ENCODE measurements at regions of chr1 and their contacts with region 1.

Region 1: GRCh38 chr1:225881969-225882693 is at the start of gene TMEM63A:
- DNase-seq: peak; percentile 91
- ATAC-seq: peak; percentile 78
- H3K4me3 Mint-ChIP-seq: peak within 1 kb of the TSS; percentile 87
- H3K27ac Mint-ChIP-seq: peak within 1 kb of the TSS; percentile 90
- H3K4me1 Mint-ChIP-seq: peaks cover 40% of the 10 kb centered on the region
- H3K27me3 Mint-ChIP-seq: peaks cover 7% of the 10 kb centered on the region
- total RNA-seq, gene TMEM63A: 196 to 198 TPM

Region 2: DNA sequence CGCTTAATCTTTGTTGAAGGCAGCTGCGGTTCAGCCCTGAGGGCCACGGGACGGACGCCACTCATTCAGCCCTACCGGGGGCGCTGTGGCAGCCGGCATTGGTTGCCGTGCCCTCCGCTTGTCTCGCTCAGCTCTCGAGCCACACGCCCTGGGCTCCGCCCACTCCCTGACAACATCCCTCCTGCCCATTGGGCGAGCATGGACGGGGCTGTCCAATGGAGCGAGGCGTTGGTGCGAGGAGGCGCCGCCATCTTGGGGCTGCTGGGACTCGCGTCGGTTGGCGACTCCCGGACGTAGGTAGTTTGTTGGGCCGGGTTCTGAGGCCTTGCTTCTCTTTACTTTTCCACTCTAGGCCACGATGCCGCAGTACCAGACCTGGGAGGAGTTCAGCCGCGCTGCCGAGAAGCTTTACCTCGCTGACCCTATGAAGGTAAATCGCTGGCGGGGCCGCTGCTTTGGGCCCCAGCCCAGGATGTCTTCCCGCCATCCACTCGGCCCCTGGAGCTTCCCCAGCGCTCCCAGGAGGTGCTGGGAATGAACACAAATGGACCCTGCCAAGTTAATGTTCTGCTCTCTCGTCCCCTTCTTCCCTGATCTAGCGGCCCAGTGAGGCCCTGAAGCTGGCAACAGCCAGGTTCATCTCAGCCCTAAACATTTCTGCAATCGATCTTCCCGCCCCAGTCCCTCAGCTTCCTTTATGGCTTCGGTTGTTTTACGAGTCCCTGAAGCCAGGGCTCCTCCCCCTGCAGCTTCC is 104.4 kb before region 1 on chr1 and contains the start of gene SRP9:
- POLR2A ChIA-PET with region 1: interaction called, 63 read pairs
- DNase-seq: peak; percentile 98
- ATAC-seq: peak; percentile 97
- H3K4me3 Mint-ChIP-seq: no peak within 1 kb of the TSS
- H3K27ac Mint-ChIP-seq: no peak within 1 kb of the TSS
- H3K4me1 Mint-ChIP-seq: peaks cover 20% of the 10 kb centered on the region
- H3K27me3 Mint-ChIP-seq: no peaks in the 10 kb centered on the region
- total RNA-seq, gene SRP9: 209 to 226 TPM

Region 3: DNA sequence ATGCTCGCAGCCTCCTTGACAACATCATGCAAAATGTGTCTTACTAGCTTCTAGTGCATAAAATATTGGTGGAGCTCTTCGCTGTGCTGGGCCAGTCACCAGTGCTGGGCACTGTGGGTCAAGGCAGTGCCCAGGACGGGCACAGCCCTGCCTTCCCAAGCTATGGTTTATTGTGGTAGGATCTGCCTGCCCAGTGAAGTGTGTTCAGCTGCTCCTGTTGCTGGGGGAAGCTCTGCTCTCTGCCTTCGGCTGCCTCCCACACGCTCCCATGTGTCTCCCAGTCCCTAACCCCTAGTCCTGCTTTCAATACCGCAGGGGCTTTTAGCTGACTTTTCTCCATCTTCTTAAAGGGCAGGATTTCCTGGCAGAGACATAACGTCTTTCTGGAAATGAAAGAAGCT is 56.5 kb before region 1 on chr1:
- POLR2A ChIA-PET with region 1: no interaction called
- DNase-seq: no peak
- ATAC-seq: no peak
- H3K4me3 Mint-ChIP-seq: no peak overlapping the region
- H3K27ac Mint-ChIP-seq: no peak overlapping the region
- H3K4me1 Mint-ChIP-seq: no peaks in the 10 kb centered on the region
- H3K27me3 Mint-ChIP-seq: no peaks in the 10 kb centered on the region

Region 4: GRCh38 chr1:225866061-225866837 is 15.9 kb before region 1 on chr1:
- POLR2A ChIA-PET with region 1: interaction called, 26 read pairs
- DNase-seq: peak; percentile 50
- ATAC-seq: peak; percentile 93
- H3K4me3 Mint-ChIP-seq: peak overlapping the region; percentile 57
- H3K27ac Mint-ChIP-seq: peak overlapping the region; percentile 79
- H3K4me1 Mint-ChIP-seq: peaks cover 34% of the 10 kb centered on the region
- H3K27me3 Mint-ChIP-seq: no peaks in the 10 kb centered on the region

Region 5: DNA sequence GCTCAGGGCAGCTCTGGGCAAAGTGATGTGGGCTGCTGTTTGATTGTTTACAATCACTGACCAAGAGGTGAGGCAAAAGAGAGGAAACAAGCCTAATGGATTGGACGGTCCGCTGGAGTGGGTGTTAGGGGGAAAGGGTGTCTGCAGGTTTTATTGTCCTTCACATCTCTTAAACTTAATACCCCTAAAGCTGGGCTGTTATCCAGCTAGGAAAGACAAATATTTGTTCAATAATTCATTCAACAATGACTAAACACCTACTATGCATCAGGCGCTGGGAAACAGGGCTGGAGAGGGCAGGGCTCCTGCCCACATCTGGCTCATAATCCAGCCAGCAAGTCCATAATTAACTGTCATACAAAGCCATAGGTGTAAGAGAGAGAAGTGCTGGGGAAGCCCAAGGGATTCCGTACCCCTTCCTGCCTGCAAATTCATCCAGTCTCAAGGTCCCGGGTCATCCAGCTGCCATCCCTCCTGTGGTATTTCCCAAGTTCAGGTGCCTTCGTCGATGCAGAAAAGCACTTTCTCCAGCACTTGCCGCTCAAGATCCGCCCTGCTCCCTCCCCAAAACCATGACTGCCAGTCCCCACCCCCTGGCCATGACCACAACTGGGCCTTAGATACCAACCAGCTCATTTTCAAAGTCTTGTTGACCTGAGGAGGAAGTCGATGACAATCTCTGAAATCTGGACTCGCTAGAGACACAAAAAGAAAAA is 10.6 kb before region 1 on chr1:
- POLR2A ChIA-PET with region 1: interaction called, 26 read pairs
- DNase-seq: no peak
- ATAC-seq: no peak
- H3K4me3 Mint-ChIP-seq: no peak overlapping the region
- H3K27ac Mint-ChIP-seq: peak overlapping the region; percentile 40
- H3K4me1 Mint-ChIP-seq: peaks cover 45% of the 10 kb centered on the region
- H3K27me3 Mint-ChIP-seq: no peaks in the 10 kb centered on the region

Region 6: DNA sequence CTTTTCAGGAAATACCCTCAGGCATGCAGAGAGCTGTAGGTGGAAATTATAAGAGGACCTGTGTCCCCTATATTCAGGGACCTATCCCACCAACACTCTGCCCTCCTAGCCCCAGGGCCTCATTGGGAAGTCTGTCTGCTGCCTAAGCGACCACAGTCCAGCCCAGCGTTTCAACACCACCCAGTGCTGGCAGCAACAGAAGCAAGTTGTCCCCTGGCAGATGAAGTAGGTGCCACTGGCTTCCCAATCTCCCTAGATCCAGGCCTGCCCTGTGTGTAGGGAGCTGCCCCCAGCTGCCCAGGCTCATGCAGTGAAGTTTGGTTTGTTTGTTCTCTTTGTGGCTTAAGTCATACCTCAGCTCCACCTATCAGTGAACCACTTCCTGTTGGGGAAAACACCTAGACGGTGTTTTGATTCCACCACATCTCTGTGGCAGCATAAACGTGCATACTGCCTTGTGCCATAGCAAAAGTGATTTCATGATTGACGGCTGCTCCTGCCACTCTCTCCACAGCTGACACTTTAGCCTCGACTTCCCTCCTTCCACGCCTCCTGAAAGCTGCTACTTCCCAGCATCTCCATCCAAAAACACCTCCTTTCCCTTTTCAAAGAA is 14.9 kb after region 1 on chr1:
- POLR2A ChIA-PET with region 1: interaction called, 61 read pairs
- DNase-seq: peak; percentile 62
- ATAC-seq: peak; percentile 94
- H3K4me3 Mint-ChIP-seq: peak overlapping the region; percentile 55
- H3K27ac Mint-ChIP-seq: peak overlapping the region; percentile 54
- H3K4me1 Mint-ChIP-seq: peaks cover 23% of the 10 kb centered on the region
- H3K27me3 Mint-ChIP-seq: peaks cover 21% of the 10 kb centered on the region

Region 7: DNA sequence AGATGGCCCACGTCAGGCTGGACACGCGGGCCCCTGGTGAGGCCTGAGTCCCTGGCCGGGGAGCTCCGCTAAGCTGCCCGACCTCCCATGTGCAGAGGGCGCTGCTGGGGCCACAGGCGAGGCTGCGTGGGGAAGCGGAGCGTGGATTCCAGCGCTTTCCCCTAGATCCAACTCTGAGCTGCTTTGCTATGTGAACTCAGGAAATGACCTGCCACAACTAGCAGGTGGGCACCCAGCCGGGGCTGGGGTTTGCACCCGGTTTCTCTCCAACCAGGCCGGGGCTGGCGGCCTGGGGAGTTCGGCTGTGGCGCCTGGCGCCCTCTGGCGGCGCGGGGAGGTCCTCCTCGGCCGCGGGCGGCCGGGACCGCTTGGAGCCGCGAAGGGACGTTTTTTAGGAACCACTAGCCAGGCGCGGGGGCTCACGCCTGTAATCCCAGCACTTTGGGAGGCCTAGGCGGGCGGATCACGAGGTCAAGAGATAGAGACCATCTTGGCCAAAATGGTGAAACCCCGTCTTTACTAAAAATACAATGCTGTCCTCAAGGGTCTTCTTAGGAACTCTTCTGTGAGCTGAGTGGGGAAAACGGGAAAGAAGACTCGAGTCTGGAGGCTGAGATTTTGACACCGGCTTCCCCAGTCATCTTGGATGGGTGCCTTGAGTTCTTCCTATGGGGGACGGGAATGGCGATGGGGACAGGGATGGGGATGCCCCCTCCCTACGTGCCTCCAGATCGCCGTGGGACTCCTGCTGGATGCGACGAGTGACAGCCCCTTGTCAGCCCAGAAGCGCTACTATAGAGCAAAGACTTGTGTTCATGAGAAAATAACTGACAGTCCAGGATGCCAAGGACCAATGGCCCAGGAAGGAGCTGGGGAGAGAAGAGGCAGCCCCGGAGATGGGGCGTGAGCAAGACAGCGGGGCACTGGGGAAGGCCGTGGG is 29.3 kb after region 1 on chr1:
- POLR2A ChIA-PET with region 1: interaction called, 10 read pairs
- DNase-seq: peak; percentile 88
- ATAC-seq: peak; percentile 89
- H3K4me3 Mint-ChIP-seq: no peak overlapping the region
- H3K27ac Mint-ChIP-seq: no peak overlapping the region
- H3K4me1 Mint-ChIP-seq: peaks cover 9% of the 10 kb centered on the region
- H3K27me3 Mint-ChIP-seq: peaks cover 5% of the 10 kb centered on the region

Region 8: GRCh38 chr1:225923692-225924555 is 41.8 kb after region 1 on chr1 and contains the start of gene PYCR2:
- POLR2A ChIA-PET with region 1: interaction called, 32 read pairs
- DNase-seq: peak; percentile 97
- ATAC-seq: peak; percentile 95
- H3K4me3 Mint-ChIP-seq: peak within 1 kb of the TSS; percentile 96
- H3K27ac Mint-ChIP-seq: peak within 1 kb of the TSS; percentile 95
- H3K4me1 Mint-ChIP-seq: peaks cover 43% of the 10 kb centered on the region
- H3K27me3 Mint-ChIP-seq: no peaks in the 10 kb centered on the region
- total RNA-seq, gene PYCR2: 118 to 125 TPM

Region 9: DNA sequence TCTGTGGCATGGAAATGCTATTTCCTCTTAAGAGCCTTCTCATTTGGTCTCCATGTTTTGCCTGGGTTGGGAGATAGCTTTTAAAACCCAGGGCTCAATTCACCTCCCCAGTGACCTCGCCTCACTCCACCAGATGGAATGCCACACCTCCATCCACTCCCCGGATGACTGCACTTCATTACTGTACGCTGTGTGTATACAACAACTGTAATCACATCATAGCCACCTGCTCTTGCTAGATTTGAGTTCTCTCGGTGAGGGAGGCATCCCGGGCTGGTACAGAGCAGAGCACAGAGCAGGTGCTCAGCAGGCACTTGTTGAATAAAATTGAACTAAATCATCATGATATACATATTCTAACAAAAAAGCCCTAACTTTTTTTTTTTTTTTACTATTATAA is 91.0 kb after region 1 on chr1:
- POLR2A ChIA-PET with region 1: no interaction called
- DNase-seq: no peak
- ATAC-seq: no peak
- H3K4me3 Mint-ChIP-seq: no peak overlapping the region
- H3K27ac Mint-ChIP-seq: no peak overlapping the region
- H3K4me1 Mint-ChIP-seq: peaks cover 11% of the 10 kb centered on the region
- H3K27me3 Mint-ChIP-seq: no peaks in the 10 kb centered on the region

Measured in activated naive CD8-positive, alpha-beta T cell treated with anti-CD3 and anti-CD28 coated beads, Interleukin-2, amount 10 ng/mL, durations not matched to agents 7 days and 5 days (primary cell).